ENCODE measurements at regions of chr12 and their contacts with region 1.

Region 1: GRCh38 chr12:98516184-98516873 is 939 bp downstream of the TMPO start:
- DNase-seq: peak; percentile 82
- ATAC-seq: peak; percentile 79
- H3K4me3 ChIP-seq: peak overlapping the region; percentile 83 to 85
- H3K27ac ChIP-seq: peak overlapping the region in 1 of 2 donors; percentile 73
- H3K4me1 ChIP-seq: peaks cover 0 to 2% of the 10 kb centered on the region in 2 donors
- H3K27me3 ChIP-seq: no peaks in the 10 kb centered on the region

Region 2: GRCh38 chr12:97006585-97006984 is 1509.7 kb before region 1 on chr12:
- intact Hi-C with region 1: no loop called
- DNase-seq: no peak
- ATAC-seq: no peak
- H3K4me3 ChIP-seq: no peak overlapping the region
- H3K27ac ChIP-seq: no peak overlapping the region
- H3K4me1 ChIP-seq: no peaks in the 10 kb centered on the region
- H3K27me3 ChIP-seq: no peaks in the 10 kb centered on the region

Region 3: DNA sequence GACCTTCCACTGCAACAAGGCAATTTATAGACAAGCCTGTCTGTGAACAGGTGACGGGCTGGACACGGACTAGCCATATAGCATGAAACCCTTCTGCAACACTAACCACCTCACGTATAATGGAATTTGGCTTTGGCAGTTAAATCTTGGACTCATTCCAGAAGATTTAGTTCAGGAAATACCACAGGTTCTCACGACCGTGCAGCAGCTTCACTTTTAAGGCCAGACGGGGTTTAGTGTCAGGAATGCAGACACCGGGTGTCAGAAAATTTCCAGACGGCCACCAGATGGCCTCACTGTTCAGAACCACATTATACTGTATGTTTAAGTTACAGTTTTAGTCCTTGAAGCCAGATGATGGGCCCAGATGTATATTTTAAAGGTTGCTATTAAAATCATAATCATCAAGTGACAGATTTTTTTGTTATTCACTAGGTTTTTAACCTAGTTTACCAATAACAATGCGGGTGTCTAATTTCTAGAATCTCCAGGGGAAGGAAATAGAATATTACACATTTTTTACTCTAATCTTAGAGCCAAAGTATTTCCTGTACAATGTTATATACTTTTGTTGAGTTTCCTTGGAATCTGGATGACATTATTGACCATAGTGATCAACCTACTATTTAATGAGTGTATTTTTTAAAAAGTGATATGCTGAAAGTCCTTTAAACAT is 91.5 kb before region 1 on chr12:
- intact Hi-C with region 1: loop called (anchors 5 kb)
- DNase-seq: peak; percentile 71 to 78
- ATAC-seq: no peak
- H3K4me3 ChIP-seq: no peak overlapping the region
- H3K27ac ChIP-seq: no peak overlapping the region
- H3K4me1 ChIP-seq: peaks cover 0 to 2% of the 10 kb centered on the region in 2 donors
- H3K27me3 ChIP-seq: no peaks in the 10 kb centered on the region

Region 4: DNA sequence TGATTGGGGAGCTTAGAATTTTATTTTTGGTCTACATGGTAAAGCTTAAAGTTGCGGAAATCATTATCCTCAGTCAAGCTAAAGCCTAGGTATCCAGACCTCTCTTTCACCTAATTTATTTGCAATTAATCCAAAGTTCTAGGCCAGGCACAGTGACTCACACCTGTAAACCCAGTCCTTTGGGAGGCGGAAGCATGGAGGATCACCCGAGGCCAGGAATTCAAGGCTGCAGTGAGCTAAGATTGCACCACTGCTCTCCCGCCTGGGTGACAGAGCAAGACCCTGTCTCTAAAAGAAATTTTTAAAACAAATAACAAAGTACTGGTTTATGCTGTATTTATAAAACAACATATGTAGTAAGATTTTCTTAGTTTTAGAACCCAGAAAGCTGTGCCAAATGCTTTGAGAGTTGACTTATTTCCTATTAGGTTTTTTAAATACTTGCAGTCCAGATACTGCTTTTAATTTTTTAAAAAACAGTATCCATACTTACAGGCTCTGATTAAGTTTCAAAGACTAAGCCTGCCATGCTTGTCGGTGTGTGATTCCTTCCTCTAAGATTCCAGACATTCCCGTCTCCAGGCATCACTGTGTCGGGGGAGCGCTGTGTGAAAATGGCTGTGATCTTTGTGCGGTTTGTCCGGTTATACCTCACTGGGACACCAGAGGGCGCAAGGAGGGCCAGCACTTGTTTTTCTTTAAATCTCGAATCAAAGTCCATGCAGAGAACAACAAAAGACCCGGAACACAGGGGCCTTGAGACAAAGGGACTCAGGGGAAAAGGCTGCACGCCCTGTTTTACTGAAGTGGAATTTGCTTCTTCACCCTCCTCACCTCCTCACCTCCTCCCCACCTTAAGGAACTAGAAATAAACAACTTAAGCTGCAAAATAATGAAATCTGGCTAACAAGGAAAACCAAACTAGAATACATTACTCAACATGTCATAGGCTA is 25.6 kb before region 1 on chr12:
- intact Hi-C with region 1: loop called in 1 of 2 experiments (anchors 1 kb)
- DNase-seq: peak; percentile 88 to 94
- ATAC-seq: peak; percentile 95
- H3K4me3 ChIP-seq: no peak overlapping the region
- H3K27ac ChIP-seq: peak overlapping the region in 1 of 2 donors; percentile 17
- H3K4me1 ChIP-seq: no peaks in the 10 kb centered on the region
- H3K27me3 ChIP-seq: no peaks in the 10 kb centered on the region

Region 5: DNA sequence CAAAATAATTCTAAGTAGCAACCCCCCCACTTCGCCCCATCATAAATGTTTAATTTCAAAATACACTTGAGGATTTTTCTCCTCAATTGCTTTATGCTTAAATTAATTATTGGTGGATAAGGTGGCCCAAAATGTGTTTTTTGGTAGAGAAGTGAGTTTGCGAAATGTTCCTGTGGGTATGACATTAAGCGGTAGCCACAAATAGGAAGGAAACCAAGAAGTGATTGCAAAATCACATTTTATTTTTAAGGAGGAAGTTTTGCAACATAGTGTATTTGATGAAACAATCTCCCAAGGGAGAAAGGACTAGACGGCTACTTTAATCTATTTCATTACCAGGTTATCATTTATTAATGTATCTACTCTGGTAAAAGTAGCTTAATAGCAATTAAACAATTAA is 102.6 kb after region 1 on chr12:
- intact Hi-C with region 1: no loop called
- DNase-seq: no peak
- ATAC-seq: peak; percentile 57
- H3K4me3 ChIP-seq: no peak overlapping the region
- H3K27ac ChIP-seq: no peak overlapping the region
- H3K4me1 ChIP-seq: no peaks in the 10 kb centered on the region
- H3K27me3 ChIP-seq: no peaks in the 10 kb centered on the region

Measured in aorta (tissue), 5 donors.